Activated CD4-positive, alpha-beta memory T cell treated with anti-CD3 and anti-CD28 coated beads, Interleukin-2, amount 10 ng/mL, durations not matched to agents 7 days and 5 days (primary cell): ENCODE measurements at regions of chr20 and their contacts with region 1.

Region 1: GRCh38 chr20:45971675-45972499 is at the start of gene ZNF335:
- DNase-seq: peak; percentile 94
- H3K4me3 Mint-ChIP-seq: peak within 1 kb of the TSS; percentile 78
- H3K27ac Mint-ChIP-seq: peak within 1 kb of the TSS; percentile 99
- H3K4me1 Mint-ChIP-seq: peaks cover 28% of the 10 kb centered on the region
- H3K27me3 Mint-ChIP-seq: peaks cover 8% of the 10 kb centered on the region
- total RNA-seq, gene ZNF335: 35.7 to 36.7 TPM

Region 2: DNA sequence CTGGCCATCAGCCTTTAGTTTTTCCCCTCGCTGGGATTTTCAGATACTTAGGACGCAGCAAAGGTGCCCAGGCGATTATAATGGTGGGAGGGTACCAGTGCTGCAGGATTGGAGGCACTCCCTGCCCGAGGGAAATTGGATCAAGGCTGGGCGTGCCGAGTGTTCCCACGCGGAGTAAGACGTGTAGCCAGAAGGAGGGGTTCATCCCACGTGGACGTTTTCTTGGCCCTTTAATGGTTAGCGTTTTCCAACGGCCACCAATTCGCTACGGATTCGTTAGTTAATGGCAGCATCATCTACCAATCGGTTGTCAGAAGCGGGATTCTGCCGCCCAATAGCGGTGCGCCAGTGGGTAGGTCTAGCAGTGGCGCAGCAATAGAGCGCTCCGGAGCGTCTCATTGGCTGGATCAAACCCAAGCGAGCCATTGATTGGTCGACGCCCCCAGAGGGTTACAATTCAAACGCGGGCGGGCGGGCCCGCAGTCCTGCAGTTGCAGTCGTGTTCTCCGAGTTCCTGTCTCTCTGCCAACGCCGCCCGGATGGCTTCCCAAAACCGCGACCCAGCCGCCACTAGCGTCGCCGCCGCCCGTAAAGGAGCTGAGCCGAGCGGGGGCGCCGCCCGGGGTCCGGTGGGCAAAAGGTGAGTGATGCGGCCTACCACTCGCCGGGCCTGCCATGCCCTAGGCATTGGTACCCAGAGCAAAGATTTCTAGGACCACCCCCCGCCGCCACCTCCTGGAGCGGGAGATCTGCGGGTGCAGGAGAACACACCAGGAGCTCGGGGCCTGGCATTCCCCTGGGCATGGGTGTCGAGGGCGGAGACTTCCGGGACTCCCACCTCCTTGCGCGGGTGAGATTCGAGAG is 159.5 kb before region 1 on chr20 and contains the start of gene UBE2C:
- CTCF ChIA-PET with region 1: interaction called, 15 read pairs
- POLR2A ChIA-PET with region 1: interaction called, 26 read pairs
- DNase-seq: peak; percentile 97
- H3K4me3 Mint-ChIP-seq: peak within 1 kb of the TSS; percentile 99
- H3K27ac Mint-ChIP-seq: peak within 1 kb of the TSS; percentile 83
- H3K4me1 Mint-ChIP-seq: peaks cover 36% of the 10 kb centered on the region
- H3K27me3 Mint-ChIP-seq: no peaks in the 10 kb centered on the region
- total RNA-seq, gene UBE2C: 170 to 184 TPM

Region 3: GRCh38 chr20:45857114-45857881 is 114.6 kb before region 1 on chr20 and contains the starts of genes ACOT8 and ZSWIM3:
- CTCF ChIA-PET with region 1: interaction called, 12 read pairs
- POLR2A ChIA-PET with region 1: interaction called, 41 read pairs
- DNase-seq: peak; percentile 96
- H3K4me3 Mint-ChIP-seq: peak within 1 kb of the TSS; percentile 98
- H3K27ac Mint-ChIP-seq: peak within 1 kb of the TSS; percentile 99
- H3K4me1 Mint-ChIP-seq: peaks cover 55% of the 10 kb centered on the region
- H3K27me3 Mint-ChIP-seq: no peaks in the 10 kb centered on the region
- total RNA-seq, gene ACOT8: 36.0 to 36.5 TPM
- total RNA-seq, gene ZSWIM3: 5.5 to 5.7 TPM

Region 4: DNA sequence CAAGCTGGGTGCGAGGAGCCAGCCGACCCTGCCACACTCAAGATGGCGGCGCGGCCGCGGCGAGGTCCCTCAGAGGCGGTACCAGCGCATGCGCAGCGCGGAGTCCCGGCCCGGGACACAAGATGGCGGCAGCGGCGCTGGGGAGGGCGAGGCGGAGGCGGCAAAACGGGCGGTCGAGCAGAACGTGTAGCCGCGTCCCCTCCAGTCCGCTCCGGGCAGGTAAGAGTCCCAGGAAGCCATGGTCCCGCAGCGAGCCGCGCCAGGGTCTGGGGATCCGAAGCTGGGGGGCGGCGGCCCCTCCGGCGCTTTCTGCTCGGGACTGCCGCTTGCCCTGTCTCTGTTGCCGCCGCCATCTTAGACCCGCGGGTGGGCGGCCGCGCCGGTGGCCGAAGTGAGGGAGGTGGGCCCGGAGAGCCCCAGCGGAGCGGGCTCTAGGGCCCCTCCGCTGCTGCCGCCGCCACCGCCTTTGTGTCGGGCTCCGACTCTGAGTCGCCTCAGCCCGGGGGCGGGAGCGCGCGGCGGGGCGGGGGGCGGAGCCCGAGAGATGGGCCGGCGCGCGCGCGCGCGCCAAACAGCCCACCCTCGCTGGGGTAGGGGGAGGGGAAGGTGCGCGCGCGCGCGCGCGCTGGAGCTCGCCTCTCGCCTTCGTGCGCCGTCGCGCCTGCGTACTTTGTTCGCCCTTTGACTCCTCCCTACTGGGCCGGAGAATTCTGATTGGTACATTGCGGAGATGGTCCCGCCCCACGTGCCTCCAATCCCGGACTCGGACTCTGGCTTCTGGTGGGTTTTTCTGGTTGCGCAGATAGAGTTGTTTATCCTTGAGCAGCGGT is 37.1 kb before region 1 on chr20 and contains the start of gene PCIF1:
- CTCF ChIA-PET with region 1: interaction called, 73 read pairs
- POLR2A ChIA-PET with region 1: interaction called, 138 read pairs
- DNase-seq: peak; percentile 98
- H3K4me3 Mint-ChIP-seq: peak within 1 kb of the TSS; percentile 87
- H3K27ac Mint-ChIP-seq: peak within 1 kb of the TSS; percentile 96
- H3K4me1 Mint-ChIP-seq: peaks cover 29% of the 10 kb centered on the region
- H3K27me3 Mint-ChIP-seq: no peaks in the 10 kb centered on the region
- total RNA-seq, gene PCIF1: 44.2 to 45.7 TPM

Region 5: DNA sequence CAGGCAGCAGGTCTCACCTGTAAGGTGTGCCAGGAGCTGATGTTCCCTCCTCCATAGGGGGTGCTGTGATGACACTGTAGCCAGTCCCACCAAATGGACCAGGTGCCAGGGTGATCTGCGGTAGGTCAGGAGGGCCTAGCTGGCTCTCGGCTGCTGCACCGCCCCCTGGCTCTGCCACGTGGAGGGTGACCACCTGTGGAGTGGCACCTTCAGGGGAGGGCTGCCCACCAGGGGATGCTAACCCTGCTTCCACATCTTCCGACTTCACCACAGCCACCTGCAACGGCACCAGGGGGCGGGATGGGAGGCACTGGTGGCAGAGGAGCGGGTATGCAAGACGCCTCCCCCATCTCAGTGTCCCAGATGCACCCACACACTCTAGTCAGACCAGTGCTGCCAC is 18.2 kb before region 1 on chr20:
- CTCF ChIA-PET with region 1: interaction called, 15 read pairs
- POLR2A ChIA-PET with region 1: interaction called, 56 read pairs
- DNase-seq: no peak
- H3K4me3 Mint-ChIP-seq: no peak overlapping the region
- H3K27ac Mint-ChIP-seq: no peak overlapping the region
- H3K4me1 Mint-ChIP-seq: peaks cover 6% of the 10 kb centered on the region
- H3K27me3 Mint-ChIP-seq: no peaks in the 10 kb centered on the region

Region 6: GRCh38 chr20:45998761-45999160 is 26.9 kb after region 1 on chr20:
- CTCF ChIA-PET with region 1: interaction called, 12 read pairs
- POLR2A ChIA-PET with region 1: interaction called, 4 read pairs
- DNase-seq: no peak
- H3K4me3 Mint-ChIP-seq: no peak overlapping the region
- H3K27ac Mint-ChIP-seq: no peak overlapping the region
- H3K4me1 Mint-ChIP-seq: peaks cover 51% of the 10 kb centered on the region
- H3K27me3 Mint-ChIP-seq: peaks cover 17% of the 10 kb centered on the region

Region 7: GRCh38 chr20:46013826-46014516 is 42.1 kb after region 1 on chr20:
- CTCF ChIA-PET with region 1: interaction called, 29 read pairs
- POLR2A ChIA-PET with region 1: interaction called, 5 read pairs
- DNase-seq: peak; percentile 73
- H3K4me3 Mint-ChIP-seq: peak overlapping the region; percentile 30
- H3K27ac Mint-ChIP-seq: no peak overlapping the region
- H3K4me1 Mint-ChIP-seq: peaks cover 56% of the 10 kb centered on the region
- H3K27me3 Mint-ChIP-seq: peaks cover 68% of the 10 kb centered on the region